Activated CD8-positive, alpha-beta T cell treated with anti-CD3 and anti-CD28 coated beads, Interleukin-2, amount 10 ng/mL, durations not matched to agents 7 days and 5 days (primary cell): ENCODE measurements at regions of chr10 and their contacts with region 1.

Region 1: DNA sequence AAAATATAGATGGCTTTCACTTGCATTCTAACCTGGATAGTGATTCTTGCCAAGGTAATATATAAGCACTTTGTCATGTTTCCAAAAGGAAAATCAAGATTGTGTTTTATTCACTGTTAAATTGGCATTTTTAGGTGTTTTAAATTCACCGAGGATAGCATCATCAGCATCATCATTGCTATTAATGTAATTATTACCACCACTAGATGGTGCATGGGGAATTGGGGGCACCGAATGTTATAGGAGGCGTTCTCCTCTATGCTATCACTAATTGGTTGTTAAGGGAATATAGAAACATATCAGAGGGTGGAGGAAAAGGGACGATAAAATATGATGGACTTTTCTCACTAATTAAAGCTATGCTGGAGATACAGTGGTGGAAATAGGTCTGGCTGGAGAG is 95.5 kb downstream of the CELF2 start:
- DNase-seq: peak; percentile 51
- ATAC-seq: peak; percentile 95
- H3K4me3 Mint-ChIP-seq: no peak overlapping the region
- H3K27ac Mint-ChIP-seq: no peak overlapping the region
- H3K4me1 Mint-ChIP-seq: peaks cover 10% of the 10 kb centered on the region
- H3K27me3 Mint-ChIP-seq: no peaks in the 10 kb centered on the region

Region 2: DNA sequence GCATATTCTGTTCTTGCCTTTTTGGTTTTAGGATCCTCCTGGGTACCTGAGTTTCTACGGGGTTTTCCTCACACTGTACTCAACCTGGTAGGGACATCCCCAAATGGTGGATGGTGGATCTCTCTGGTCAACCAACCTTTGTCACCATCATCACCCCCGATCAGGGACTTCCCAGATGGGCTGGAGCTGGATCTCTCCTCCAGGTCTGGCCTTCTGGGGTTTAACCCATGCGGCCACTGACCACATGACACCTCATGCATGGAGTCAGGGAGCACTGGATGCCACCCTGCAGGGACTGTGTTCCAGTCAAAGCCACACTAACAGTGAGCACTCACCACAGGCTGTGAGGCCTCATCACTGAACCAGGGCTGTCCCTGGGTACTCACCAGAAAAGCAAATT is 15.5 kb before region 1 on chr10:
- CTCF ChIA-PET with region 1: interaction called, 20 read pairs
- POLR2A ChIA-PET with region 1: no interaction called
- DNase-seq: no peak
- ATAC-seq: no peak
- H3K4me3 Mint-ChIP-seq: no peak overlapping the region
- H3K27ac Mint-ChIP-seq: no peak overlapping the region
- H3K4me1 Mint-ChIP-seq: no peaks in the 10 kb centered on the region
- H3K27me3 Mint-ChIP-seq: peaks cover 35% of the 10 kb centered on the region

Region 3: GRCh38 chr10:11145495-11145855 is 32.3 kb after region 1 on chr10:
- CTCF ChIA-PET with region 1: interaction called, 21 read pairs
- POLR2A ChIA-PET with region 1: interaction called, 11 read pairs
- DNase-seq: peak; percentile 86
- ATAC-seq: peak; percentile 69
- H3K4me3 Mint-ChIP-seq: peak overlapping the region; percentile 72
- H3K27ac Mint-ChIP-seq: peak overlapping the region; percentile 99
- H3K4me1 Mint-ChIP-seq: peaks cover 94% of the 10 kb centered on the region
- H3K27me3 Mint-ChIP-seq: no peaks in the 10 kb centered on the region

Region 4: DNA sequence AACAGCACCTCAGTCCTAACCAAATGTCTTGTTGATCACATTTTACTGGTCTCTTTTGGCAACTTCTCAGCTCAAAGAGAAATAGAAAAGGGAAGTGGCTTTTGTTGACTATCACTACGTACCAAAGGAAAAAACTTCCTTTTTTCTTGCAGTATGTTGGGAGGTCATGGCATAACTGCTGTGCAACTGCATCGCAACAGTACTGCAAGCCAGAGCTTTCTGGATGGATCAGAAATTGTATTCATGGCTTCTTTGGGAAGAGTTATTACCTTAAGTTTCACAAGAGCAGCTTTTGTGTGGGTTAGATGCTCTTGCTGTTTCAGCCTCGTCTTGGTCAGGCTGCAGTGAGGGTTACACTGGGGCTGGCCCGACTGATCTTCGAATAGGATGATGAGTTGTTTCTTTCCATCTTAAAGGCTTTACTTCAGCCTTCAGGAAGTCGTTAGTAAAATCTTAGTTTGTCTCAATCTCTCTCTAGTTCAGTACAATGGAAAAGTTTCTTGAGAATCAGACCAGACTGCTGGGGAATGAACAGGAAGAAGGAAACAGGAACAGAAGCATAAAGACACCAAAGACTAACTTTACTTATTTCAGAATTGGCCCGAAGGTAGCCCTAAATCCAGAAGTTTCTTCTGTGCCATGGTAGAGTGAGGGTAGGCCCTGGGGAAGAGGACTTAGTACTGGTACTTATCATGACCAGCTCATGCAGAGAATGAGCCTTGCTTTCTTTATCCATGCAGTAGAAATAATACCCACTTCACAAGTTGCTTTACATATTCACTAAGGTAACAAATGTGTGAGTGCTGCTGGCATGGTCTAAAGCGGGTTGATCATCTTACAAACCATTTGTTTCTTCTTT is 58.1 kb after region 1 on chr10:
- CTCF ChIA-PET with region 1: interaction called, 25 read pairs
- POLR2A ChIA-PET with region 1: interaction called, 29 read pairs
- DNase-seq: no peak
- ATAC-seq: peak; percentile 38
- H3K4me3 Mint-ChIP-seq: no peak overlapping the region
- H3K27ac Mint-ChIP-seq: no peak overlapping the region
- H3K4me1 Mint-ChIP-seq: peaks cover 40% of the 10 kb centered on the region
- H3K27me3 Mint-ChIP-seq: no peaks in the 10 kb centered on the region

Region 5: GRCh38 chr10:11270135-11270857 is 157.1 kb after region 1 on chr10:
- CTCF ChIA-PET with region 1: interaction called, 14 read pairs
- POLR2A ChIA-PET with region 1: interaction called, 3 read pairs
- DNase-seq: peak; percentile 69
- ATAC-seq: peak; percentile 79
- H3K4me3 Mint-ChIP-seq: no peak overlapping the region
- H3K27ac Mint-ChIP-seq: peak overlapping the region; percentile 53
- H3K4me1 Mint-ChIP-seq: peaks cover 40% of the 10 kb centered on the region
- H3K27me3 Mint-ChIP-seq: no peaks in the 10 kb centered on the region

Region 6: DNA sequence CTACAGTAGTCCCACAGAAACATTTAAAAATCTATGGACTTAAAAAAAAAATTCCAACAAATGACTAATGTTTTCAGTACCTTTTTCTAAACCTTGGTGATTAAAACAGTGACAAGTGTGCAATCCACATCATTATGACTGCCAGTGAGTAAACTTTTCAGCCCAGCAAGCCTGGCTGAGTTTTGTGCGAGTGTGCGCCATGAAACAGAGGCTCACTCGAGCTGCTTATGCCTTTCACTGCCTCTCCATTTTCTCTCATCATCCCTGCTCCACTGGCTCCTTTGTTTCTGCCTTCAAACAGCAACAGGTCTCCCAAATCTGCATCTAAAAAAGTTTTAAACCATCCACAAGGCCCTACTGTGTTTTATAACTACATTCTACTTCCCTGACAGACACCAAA is 392.5 kb after region 1 on chr10:
- CTCF ChIA-PET with region 1: no interaction called
- POLR2A ChIA-PET with region 1: no interaction called
- DNase-seq: no peak
- ATAC-seq: no peak
- H3K4me3 Mint-ChIP-seq: no peak overlapping the region
- H3K27ac Mint-ChIP-seq: no peak overlapping the region
- H3K4me1 Mint-ChIP-seq: peaks cover under 1% of the 10 kb centered on the region
- H3K27me3 Mint-ChIP-seq: peaks cover 2% of the 10 kb centered on the region